ENCODE measurements at regions of chr13 and their contacts with region 1.

Region 1: GRCh38 chr13:26498656-26499591 is 58.6 kb upstream of the WASF3 start:
- DNase-seq: no peak
- H3K4me3 ChIP-seq: no peak overlapping the region
- H3K27ac ChIP-seq: no peak overlapping the region
- H3K4me1 ChIP-seq: peaks cover 21% of the 10 kb centered on the region
- H3K27me3 ChIP-seq: no peaks in the 10 kb centered on the region
- CTCF ChIP-seq: no peak

Region 2: DNA sequence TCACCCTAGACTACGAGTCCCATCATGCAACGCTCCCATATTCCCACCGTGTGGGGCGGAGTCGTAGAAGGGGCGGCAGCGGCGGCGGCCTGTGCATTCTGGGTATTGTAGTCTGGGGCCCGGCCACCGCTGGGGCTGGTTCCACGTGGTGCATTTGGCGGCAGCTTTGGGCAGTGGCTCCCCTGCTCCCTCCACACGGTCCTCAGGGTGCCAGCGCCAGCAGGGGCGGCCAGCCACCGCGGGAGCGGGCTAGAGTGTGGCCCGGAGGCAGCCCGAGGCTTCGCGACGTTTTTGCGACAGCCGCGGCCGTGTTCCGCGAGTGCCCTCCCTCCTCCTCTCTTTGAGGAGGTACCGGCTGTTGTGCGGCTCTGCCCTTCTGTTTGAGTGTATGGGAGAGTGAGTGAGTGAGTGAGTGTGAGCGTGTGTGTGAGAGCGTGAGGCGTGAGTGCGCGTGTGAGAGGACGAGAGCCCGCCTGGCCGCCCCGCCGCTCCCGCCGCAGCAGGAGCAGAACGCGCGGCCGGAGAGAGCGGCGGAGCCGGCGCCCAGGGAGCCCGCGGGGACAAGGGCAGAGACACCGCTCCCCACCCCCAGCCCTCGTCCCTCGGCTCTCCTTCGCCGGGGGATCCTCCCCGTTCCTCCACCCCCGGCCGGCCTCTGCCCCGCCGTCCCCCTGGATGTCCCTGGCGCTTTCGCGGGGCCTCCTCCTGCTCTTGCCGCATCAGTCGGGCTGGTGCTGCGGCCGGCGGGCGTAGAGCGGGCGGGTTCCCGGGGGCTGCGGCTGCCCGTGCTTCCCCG is 244.9 kb before region 1 on chr13 and contains the start of gene CDK8:
- CTCF ChIA-PET with region 1: interaction called, 11 read pairs
- dilution Hi-C with region 1: no loop called
- in situ Hi-C with region 1: no loop called
- intact Hi-C with region 1: no loop called
- DNase-seq: peak; percentile 95
- H3K4me3 ChIP-seq: peak within 1 kb of the TSS; percentile 74 to 90 (median 84)
- H3K27ac ChIP-seq: peak within 1 kb of the TSS; percentile 58
- H3K4me1 ChIP-seq: peaks cover 9% of the 10 kb centered on the region
- H3K27me3 ChIP-seq: no peaks in the 10 kb centered on the region
- CTCF ChIP-seq: no peak
- total RNA-seq, gene CDK8: 22.0 to 23.6 TPM

Region 3: DNA sequence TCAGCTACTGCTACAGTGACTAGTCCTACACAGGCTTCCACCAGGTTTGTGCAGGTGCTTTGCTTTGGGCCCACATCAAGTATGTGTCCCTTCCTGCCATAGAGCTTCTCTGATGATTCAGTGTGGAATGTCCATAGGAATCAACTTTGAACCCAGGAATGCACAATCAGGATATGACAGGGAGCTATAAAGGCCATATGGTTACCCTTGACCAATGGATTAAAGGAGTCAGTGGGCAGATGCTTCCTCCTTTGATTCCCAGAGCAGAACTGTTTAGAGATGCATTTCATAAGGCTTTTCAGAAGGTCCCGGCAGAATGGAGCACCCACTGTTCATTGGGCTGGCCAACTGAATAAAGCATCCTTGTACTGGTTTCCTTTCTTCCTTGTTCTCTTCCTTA is 86.7 kb before region 1 on chr13:
- CTCF ChIA-PET with region 1: no interaction called
- dilution Hi-C with region 1: loop called (anchors 5 kb)
- in situ Hi-C with region 1: no loop called
- intact Hi-C with region 1: no loop called
- DNase-seq: no peak
- H3K4me3 ChIP-seq: no peak overlapping the region
- H3K27ac ChIP-seq: no peak overlapping the region
- H3K4me1 ChIP-seq: no peaks in the 10 kb centered on the region
- H3K27me3 ChIP-seq: no peaks in the 10 kb centered on the region
- CTCF ChIP-seq: no peak

Region 4: GRCh38 chr13:26557393-26558023 is 58.6 kb after region 1 on chr13 and contains the start of gene WASF3:
- CTCF ChIA-PET with region 1: no interaction called
- dilution Hi-C with region 1: no loop called
- in situ Hi-C with region 1: no loop called
- intact Hi-C with region 1: loop called (anchors 2 kb)
- DNase-seq: peak; percentile 92
- H3K4me3 ChIP-seq: peak within 1 kb of the TSS; percentile 68 to 79 (median 74)
- H3K27ac ChIP-seq: no peak within 1 kb of the TSS
- H3K4me1 ChIP-seq: no peaks in the 10 kb centered on the region
- H3K27me3 ChIP-seq: no peaks in the 10 kb centered on the region
- CTCF ChIP-seq: no peak
- total RNA-seq, gene WASF3: 7.7 to 19.4 TPM

Region 5: GRCh38 chr13:26628706-26629105 is 129.8 kb after region 1 on chr13:
- CTCF ChIA-PET with region 1: no interaction called
- dilution Hi-C with region 1: no loop called
- in situ Hi-C with region 1: no loop called
- intact Hi-C with region 1: loop called (anchors 1 kb)
- DNase-seq: peak; percentile 27
- H3K4me3 ChIP-seq: no peak overlapping the region
- H3K27ac ChIP-seq: no peak overlapping the region
- H3K4me1 ChIP-seq: no peaks in the 10 kb centered on the region
- H3K27me3 ChIP-seq: no peaks in the 10 kb centered on the region
- CTCF ChIP-seq: peak; percentile 23 to 60